Sciatic nerve (tissue), 2 donors: ENCODE measurements at regions of chr15 and their contacts with region 1.

Region 1: DNA sequence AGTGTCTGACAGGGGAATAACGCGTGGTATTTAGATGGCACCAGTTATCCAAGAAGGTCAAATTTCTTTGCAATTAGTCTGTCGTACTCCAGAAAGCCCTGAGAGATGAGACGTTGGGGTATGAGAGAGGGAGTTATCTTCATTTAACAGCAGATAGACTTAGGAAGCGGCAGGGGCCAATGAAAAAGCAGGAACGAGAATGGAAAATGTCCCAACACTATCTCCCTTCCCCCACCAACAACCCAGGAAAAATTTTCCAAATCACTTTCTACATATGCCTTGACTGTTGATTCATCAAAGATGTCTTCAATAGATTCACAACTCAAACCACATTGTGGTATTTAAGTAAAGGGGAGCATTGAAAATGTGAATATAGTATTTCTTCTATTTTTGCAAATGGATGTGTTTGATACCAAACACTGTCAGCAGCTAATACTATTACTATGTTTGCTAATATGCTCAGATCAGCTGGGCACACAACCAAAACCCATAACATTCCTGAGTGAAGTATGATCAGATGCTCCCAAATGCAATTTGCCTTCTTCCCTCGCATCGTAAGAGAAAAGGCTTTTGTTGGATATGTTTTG is 13.3 kb upstream of the GREM1 start:
- DNase-seq: no peak
- ATAC-seq: no peak

Region 2: GRCh38 chr15:31130576-31131237 is 1573.8 kb before region 1 on chr15:
- intact Hi-C with region 1: loop called (anchors 5 kb)
- DNase-seq: no peak
- ATAC-seq: no peak

Region 3: GRCh38 chr15:31365655-31366127 is 1338.8 kb before region 1 on chr15:
- intact Hi-C with region 1: no loop called
- DNase-seq: peak; percentile 90
- ATAC-seq: peak; percentile 96